BJ (cell line): ENCODE measurements at regions of chr7 and their contacts with region 1.

Region 1: GRCh38 chr7:98528079-98528478 is 89.0 kb upstream of the NPTX2 start:
- DNase-seq: no peak
- H3K4me3 ChIP-seq: no peak overlapping the region
- H3K27me3 ChIP-seq: no peaks in the 10 kb centered on the region
- CTCF ChIP-seq: no peak

Region 2: GRCh38 chr7:98641646-98642500 is 113.8 kb after region 1 on chr7:
- CTCF ChIA-PET with region 1: no interaction called
- POLR2A ChIA-PET with region 1: no interaction called
- DNase-seq: no peak
- H3K4me3 ChIP-seq: no peak overlapping the region
- H3K27me3 ChIP-seq: no peaks in the 10 kb centered on the region
- CTCF ChIP-seq: no peak

Region 3: DNA sequence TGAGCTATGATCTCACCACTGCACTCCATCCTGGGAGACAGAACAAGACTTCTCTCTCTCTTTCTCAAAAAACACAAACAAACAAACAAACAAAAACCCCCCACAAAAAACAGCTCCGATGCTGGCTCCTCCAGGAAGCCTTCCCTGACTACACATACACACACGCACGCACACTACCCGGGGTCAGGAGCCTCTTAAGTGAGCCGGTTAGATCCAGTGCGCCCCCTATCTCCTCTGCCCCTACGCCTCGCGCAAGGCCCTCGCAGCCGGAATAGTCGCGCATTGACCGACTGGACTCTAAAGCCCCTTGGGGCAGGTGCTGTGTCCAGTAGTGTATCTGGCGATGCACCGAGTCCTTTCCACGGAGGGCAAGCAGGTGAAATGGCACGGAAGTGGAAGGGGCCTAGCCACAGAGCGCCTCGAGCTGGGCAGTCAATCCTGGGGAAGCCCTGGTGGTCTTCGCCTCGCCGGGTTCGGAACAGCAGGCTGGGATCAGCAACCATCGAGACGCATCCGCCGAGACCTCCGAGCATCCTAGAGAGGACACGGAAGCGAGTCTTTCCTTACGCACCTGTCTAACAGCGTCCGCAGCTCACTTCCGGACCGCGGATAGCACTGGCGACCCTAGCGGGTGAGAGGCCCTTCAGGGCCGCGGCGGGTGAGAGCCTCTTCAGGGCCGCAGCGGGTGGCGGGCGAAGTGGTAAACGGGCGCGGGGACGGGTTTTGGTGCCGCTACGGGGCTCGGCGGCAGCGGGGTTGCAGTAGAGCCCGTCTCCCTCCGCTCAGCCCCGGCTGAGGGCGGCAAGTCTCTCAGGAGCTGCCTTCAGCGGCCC is 1088.5 kb after region 1 on chr7 and contains the start of gene ZSCAN25:
- CTCF ChIA-PET with region 1: no interaction called
- POLR2A ChIA-PET with region 1: interaction called, 10 read pairs
- DNase-seq: peak; percentile 57
- H3K4me3 ChIP-seq: peak within 1 kb of the TSS; percentile 95
- H3K27me3 ChIP-seq: no peaks in the 10 kb centered on the region
- CTCF ChIP-seq: peak; percentile 54
- polyA plus RNA-seq, gene ZSCAN25: 7.7 and 9.3 TPM in 2 replicates